Panc1 (cell line): ENCODE measurements at regions of chr3 and their contacts with region 1.

Region 1: DNA sequence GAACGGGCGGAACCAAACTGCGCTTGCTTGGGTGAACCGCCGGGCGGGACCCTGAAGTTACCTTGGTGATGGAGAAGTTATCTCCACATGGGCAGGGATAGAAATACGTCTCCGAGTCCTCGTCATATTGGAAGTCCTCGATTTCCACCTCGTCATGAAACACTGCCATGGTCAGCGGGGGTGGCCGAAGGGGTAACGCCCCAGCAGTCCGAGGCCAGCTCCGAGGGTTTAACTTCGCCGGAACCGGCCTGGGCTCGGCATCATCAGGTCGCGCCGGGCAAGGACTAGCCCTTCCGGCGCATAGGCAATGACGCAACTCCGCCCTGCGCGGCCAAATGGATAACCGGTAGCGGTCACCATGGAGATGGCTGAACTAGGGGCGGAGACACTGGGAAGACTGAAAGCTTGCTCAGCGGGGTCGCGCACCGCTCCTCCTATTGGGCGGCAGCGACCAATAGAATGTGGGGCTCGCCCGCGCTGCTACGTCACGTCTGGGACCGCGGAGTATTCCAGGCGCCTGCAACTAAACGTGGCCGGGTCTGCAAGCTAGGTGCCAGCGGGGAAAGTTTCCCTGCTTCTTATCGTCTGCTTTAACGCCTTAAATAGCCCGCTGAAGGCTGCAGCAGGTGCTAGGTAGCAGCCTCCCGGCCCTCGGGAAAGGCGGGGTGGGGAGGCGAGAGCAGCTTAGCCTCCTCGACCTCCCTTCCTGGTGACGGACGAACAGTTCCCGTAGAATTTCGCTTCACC is at the starts of genes DPH3 and OXNAD1:
- DNase-seq: peak; percentile 95
- ATAC-seq: peak; percentile 100
- H3K4me3 ChIP-seq: peak within 1 kb of the TSS; percentile 99
- H3K27ac ChIP-seq: peak within 1 kb of the TSS; percentile 90
- H3K4me1 ChIP-seq: peaks cover 9% of the 10 kb centered on the region; the same call in 1 of the 2 replicates
- H3K27me3 ChIP-seq: no peaks in the 10 kb centered on the region
- CTCF ChIP-seq: no peak
- total RNA-seq, gene DPH3: 16.5 TPM
- total RNA-seq, gene OXNAD1: 6.6 TPM

Region 2: GRCh38 chr3:15953841-15954240 is 311.0 kb before region 1 on chr3:
- CTCF ChIA-PET with region 1: no interaction called
- POLR2A ChIA-PET with region 1: no interaction called
- in situ Hi-C with region 1: no loop called
- intact Hi-C with region 1: no loop called
- DNase-seq: no peak
- ATAC-seq: no peak
- H3K4me3 ChIP-seq: no peak overlapping the region
- H3K27ac ChIP-seq: no peak overlapping the region
- H3K4me1 ChIP-seq: no peaks in the 10 kb centered on the region
- H3K27me3 ChIP-seq: no peaks in the 10 kb centered on the region
- CTCF ChIP-seq: peak; percentile 16; the same call in 1 of the 2 replicates

Region 3: DNA sequence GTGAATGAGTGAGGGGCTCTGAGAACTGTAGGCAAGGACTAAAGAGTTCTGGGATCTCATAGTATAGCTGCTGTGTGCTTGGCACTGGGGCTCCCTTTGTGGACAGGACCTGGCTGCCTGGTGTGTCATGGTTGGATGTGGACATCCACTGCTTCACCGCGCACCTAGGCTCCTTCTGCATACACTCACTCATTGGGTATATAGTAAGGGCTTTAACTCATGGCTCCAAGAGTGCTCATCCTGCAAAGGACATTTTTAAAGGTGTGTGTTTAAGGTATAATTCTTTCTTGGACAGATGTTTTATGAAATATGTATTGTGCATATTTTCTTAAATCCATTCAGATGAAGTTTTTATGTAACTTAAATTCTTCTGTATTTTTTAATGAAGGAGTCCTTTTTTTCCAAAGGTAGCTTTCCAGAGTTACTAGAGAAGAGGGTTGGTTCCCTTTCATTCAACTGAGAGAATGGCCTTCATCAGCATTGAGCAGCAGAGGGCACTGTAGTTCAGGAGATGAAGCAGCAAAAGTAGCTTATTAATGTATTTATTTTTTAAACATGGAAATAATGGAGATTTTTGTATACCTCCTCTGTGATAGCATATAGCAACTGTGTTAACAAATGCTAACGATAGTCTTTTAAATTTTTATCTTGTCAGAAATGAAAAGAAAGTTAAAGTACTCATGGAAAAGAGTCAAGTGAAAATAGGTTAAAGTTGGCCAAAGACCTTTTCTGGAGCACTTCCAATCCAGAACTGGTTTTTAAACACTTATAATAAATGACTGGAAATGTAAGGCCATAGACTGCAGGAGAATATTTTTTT is 25.3 kb after region 1 on chr3:
- CTCF ChIA-PET with region 1: interaction called, 8 read pairs
- POLR2A ChIA-PET with region 1: interaction called, 12 read pairs
- in situ Hi-C with region 1: no loop called
- intact Hi-C with region 1: no loop called
- DNase-seq: peak; percentile 20
- ATAC-seq: peak; percentile 68; the same call in 1 of the 2 replicates
- H3K4me3 ChIP-seq: no peak overlapping the region
- H3K27ac ChIP-seq: no peak overlapping the region
- H3K4me1 ChIP-seq: no peaks in the 10 kb centered on the region
- H3K27me3 ChIP-seq: no peaks in the 10 kb centered on the region
- CTCF ChIP-seq: peak; percentile 69; the same call in 1 of the 2 replicates

Region 4: DNA sequence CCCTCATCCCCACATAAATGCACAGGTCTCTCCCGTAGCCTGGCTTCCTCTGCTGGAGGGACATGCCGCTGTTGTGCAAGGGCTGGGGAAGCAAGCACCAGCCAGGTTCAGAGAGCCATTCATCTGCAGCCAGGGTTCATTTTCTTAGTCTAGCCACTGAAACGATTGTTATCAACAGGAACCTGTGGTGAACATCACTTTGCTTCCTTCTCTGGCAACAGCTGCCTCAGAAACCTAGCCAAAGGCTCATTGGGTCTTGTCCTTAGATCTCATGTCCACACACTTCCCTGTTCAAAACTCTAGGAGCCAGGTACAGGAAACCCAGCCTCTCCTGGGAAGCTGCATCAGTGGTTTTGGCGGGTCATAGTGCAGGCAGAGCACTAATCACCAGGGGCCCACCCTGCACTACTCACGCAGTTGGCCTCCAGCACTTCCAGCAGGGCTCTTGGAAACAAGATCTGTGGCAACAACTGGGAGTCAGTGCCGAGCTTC is 47.1 kb after region 1 on chr3:
- CTCF ChIA-PET with region 1: interaction called, 14 read pairs
- POLR2A ChIA-PET with region 1: no interaction called
- in situ Hi-C with region 1: no loop called
- intact Hi-C with region 1: no loop called
- DNase-seq: no peak
- ATAC-seq: no peak
- H3K4me3 ChIP-seq: no peak overlapping the region
- H3K27ac ChIP-seq: no peak overlapping the region
- H3K4me1 ChIP-seq: no peaks in the 10 kb centered on the region
- H3K27me3 ChIP-seq: no peaks in the 10 kb centered on the region
- CTCF ChIP-seq: no peak

Region 5: GRCh38 chr3:16550676-16551341 is 285.9 kb after region 1 on chr3:
- CTCF ChIA-PET with region 1: no interaction called
- POLR2A ChIA-PET with region 1: no interaction called
- in situ Hi-C with region 1: no loop called
- intact Hi-C with region 1: loop called (anchors 5 kb)
- DNase-seq: peak; percentile 71
- ATAC-seq: peak; percentile 85
- H3K4me3 ChIP-seq: no peak overlapping the region
- H3K27ac ChIP-seq: peak overlapping the region; percentile 77; the same call in 1 of the 2 replicates
- H3K4me1 ChIP-seq: no peaks in the 10 kb centered on the region; the same call in 1 of the 2 replicates
- H3K27me3 ChIP-seq: no peaks in the 10 kb centered on the region
- CTCF ChIP-seq: peak; percentile 76

Region 6: GRCh38 chr3:16884084-16884747 is 619.3 kb after region 1 on chr3:
- CTCF ChIA-PET with region 1: no interaction called
- POLR2A ChIA-PET with region 1: interaction called, 18 read pairs
- in situ Hi-C with region 1: no loop called
- intact Hi-C with region 1: no loop called
- DNase-seq: no peak
- ATAC-seq: peak; percentile 82
- H3K4me3 ChIP-seq: peak overlapping the region; percentile 56 to 58
- H3K27ac ChIP-seq: no peak overlapping the region
- H3K4me1 ChIP-seq: no peaks in the 10 kb centered on the region
- H3K27me3 ChIP-seq: no peaks in the 10 kb centered on the region; the same call in 1 of the 2 replicates
- CTCF ChIP-seq: peak; percentile 81

Region 7: DNA sequence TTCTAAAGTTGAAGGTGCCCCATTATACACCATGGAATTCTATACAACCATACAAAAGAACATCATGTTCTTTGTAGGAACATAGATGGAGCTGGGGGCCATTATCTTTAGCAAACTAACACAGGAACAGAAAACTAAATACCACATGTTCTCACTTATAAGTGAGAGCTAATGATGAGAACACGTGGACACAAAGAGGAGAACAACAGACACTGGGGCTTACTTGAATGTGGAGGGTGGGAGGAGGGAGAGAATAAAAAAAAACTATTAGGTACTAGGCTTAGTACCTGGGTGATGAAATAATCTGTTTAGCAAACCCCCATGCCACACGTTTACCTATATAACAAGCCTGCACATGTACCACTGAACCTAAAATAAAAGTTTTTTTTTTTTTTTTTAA is 962.6 kb after region 1 on chr3:
- CTCF ChIA-PET with region 1: interaction called, 14 read pairs
- POLR2A ChIA-PET with region 1: no interaction called
- in situ Hi-C with region 1: no loop called
- intact Hi-C with region 1: no loop called
- DNase-seq: no peak
- ATAC-seq: no peak
- H3K4me3 ChIP-seq: no peak overlapping the region
- H3K27ac ChIP-seq: no peak overlapping the region
- H3K4me1 ChIP-seq: no peaks in the 10 kb centered on the region
- H3K27me3 ChIP-seq: no peaks in the 10 kb centered on the region
- CTCF ChIP-seq: no peak